ENCODE measurements at regions of chr1 and their contacts with region 1.

Region 1: DNA sequence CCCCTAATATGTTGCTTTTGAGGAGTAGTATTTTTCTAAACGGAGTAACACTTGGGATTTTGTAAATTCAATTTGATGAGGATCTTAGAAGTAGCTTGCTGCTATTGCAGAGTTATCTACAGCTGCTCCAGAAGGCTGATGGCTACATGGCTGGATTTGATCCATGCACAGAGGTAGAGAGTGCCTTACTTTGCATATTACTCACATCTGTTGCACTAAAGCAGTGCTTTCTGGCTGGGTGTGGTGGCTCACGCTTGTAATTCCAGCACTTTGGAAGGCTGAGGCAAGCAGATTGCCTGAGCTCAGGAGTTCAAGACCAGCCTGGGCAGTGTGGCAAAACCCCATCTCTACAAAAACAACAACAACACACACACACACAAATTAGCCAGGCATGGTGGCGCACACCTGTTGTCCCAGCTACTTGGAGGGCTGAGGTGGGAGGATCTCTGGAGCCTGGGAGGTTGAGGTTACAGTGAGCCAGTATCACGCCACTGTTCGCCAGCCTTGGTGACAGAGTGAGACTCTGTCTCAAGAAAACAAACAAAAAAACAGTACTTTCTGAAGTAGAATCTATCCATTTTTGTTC is 24.6 kb downstream of the RALGPS2 start:
- DNase-seq: no peak
- H3K4me3 Mint-ChIP-seq: no peak overlapping the region
- H3K27ac Mint-ChIP-seq: no peak overlapping the region
- H3K4me1 Mint-ChIP-seq: no peaks in the 10 kb centered on the region
- H3K27me3 Mint-ChIP-seq: no peaks in the 10 kb centered on the region

Region 2: DNA sequence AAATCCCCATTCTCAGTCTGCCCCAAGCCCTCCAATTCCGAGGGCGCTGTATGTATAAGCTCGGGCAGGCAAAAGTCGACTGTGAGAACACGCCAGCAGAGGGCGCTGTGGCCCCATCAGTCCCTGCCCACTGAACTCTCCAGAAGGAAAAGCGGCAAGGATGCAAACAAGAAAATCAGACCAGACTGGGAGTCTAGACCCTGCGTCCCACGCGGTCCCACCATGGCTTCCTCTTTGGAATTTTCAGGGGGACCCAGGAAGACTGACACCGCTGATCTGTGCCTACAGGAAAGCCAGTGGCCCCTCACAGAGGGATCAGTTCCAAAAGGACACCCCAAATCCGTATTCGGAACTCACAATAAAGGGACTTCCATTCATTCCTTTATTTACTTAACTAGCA is 217.3 kb before region 1 on chr1:
- CTCF ChIA-PET with region 1: interaction called, 34 read pairs
- POLR2A ChIA-PET with region 1: no interaction called
- intact Hi-C with region 1: loop called (anchors 2 kb)
- DNase-seq: peak; percentile 83
- H3K4me3 Mint-ChIP-seq: no peak overlapping the region
- H3K27ac Mint-ChIP-seq: no peak overlapping the region
- H3K4me1 Mint-ChIP-seq: no peaks in the 10 kb centered on the region
- H3K27me3 Mint-ChIP-seq: no peaks in the 10 kb centered on the region